AG04450 (cell line): ENCODE measurements at regions of chr1 and their contacts with region 1.

Region 1: DNA sequence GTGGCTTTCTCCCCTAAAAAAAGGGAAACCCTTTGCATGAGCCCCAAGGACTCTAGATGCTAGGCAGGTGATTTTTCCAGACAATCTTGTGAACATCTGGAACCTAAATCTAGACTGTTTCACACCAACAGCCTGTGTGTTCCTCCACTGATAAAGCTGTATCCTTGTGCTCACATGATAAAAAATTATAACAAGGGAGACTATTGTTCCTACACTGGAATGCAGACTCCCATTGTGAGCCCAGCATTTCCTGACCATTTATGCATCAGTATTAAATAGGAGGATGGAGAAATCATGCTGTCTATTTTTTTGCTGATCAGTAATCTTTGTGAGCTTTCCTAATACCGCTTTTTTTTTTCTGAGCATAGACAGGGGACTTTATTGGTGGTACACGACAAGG is 52.5 kb downstream of the ZNF697 start:
- DNase-seq: no peak
- H3K4me3 ChIP-seq: no peak overlapping the region
- H3K27ac ChIP-seq: no peak overlapping the region
- H3K27me3 ChIP-seq: peaks cover 5% of the 10 kb centered on the region
- CTCF ChIP-seq: no peak

Region 2: GRCh38 chr1:119651641-119652040 is 56.0 kb after region 1 on chr1:
- CTCF ChIA-PET with region 1: no interaction called
- POLR2A ChIA-PET with region 1: no interaction called
- DNase-seq: no peak
- H3K4me3 ChIP-seq: no peak overlapping the region
- H3K27ac ChIP-seq: no peak overlapping the region
- H3K27me3 ChIP-seq: peaks cover 4% of the 10 kb centered on the region
- CTCF ChIP-seq: no peak

Region 3: DNA sequence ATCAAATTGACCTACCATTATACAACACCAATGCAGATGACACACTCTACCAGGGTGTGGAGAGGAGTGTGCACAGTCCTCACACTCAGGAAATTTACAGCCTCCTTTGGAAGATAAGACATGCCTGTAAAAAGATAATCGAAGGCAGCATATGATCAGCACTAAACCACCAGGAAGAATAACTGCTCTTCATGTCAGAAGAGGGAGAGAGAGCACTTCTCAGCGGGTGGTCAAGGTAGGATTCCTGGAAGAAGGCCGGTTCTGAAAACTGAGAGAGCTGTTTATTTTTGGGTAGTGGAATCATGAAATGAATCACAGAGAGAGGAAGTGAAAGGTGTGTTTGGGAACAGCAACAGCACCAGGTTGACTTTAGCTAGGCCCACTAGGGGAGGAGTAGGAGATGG is 66.4 kb after region 1 on chr1:
- CTCF ChIA-PET with region 1: interaction called, 10 read pairs
- POLR2A ChIA-PET with region 1: no interaction called
- DNase-seq: no peak
- H3K4me3 ChIP-seq: no peak overlapping the region
- H3K27ac ChIP-seq: no peak overlapping the region
- H3K27me3 ChIP-seq: peaks cover 3% of the 10 kb centered on the region
- CTCF ChIP-seq: no peak